ENCODE measurements at regions of chr11 and their contacts with region 1.

Region 1: GRCh38 chr11:63490551-63491239 is at the start of gene PLAAT5:
- DNase-seq: peak in 1 of 2 donors; percentile 48
- ATAC-seq: peak; percentile 72 to 90 (median 86)
- H3K4me3 ChIP-seq: peak within 1 kb of the TSS; percentile 30 to 63 (median 58)
- H3K27ac ChIP-seq: peak within 1 kb of the TSS in 8 of 10 donors; percentile 29 to 82 (median 49)
- H3K4me1 ChIP-seq: peaks cover 0 to 30% (median 21%) of the 10 kb centered on the region in 9 donors
- H3K27me3 ChIP-seq: peaks cover 0 to 17% (median 0%) of the 10 kb centered on the region in 7 donors
- CTCF ChIP-seq: peak in 1 of 9 donors; percentile 4
- total RNA-seq, gene PLAAT5: 0.69 to 7.2 (median 1.8) TPM

Region 2: DNA sequence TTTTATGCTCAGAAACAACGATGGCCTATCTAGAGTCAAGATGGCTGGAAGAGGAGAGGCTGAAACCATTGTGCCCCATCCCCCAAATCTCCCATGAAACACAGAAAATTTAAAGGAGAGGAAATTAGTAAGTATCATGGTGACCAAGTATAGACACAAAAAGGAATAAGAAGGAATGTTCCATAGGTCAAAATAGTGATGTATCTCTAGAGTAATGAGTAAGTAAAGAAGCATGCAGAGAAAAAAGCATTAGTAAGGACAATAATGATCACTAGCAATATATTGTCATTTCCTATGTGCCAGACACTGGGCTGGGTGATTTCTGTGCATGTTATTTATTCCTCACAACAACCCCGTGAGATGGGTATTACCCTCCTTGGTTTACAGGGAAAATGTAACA is 344.1 kb before region 1 on chr11:
- intact Hi-C with region 1: no loop called
- DNase-seq: no peak
- ATAC-seq: no peak
- H3K4me3 ChIP-seq: no peak overlapping the region
- H3K27ac ChIP-seq: no peak overlapping the region
- H3K4me1 ChIP-seq: peaks cover 0 to 6% (median 0%) of the 10 kb centered on the region in 9 donors
- H3K27me3 ChIP-seq: peaks cover 0 to 6% (median 0%) of the 10 kb centered on the region in 7 donors
- CTCF ChIP-seq: no peak

Region 3: GRCh38 chr11:63549411-63549810 is 58.7 kb after region 1 on chr11:
- intact Hi-C with region 1: loop called in 1 of 10 experiments (anchors 10 kb)
- DNase-seq: no peak
- ATAC-seq: no peak
- H3K4me3 ChIP-seq: no peak overlapping the region
- H3K27ac ChIP-seq: no peak overlapping the region
- H3K4me1 ChIP-seq: peaks cover 0 to 18% (median 0%) of the 10 kb centered on the region in 9 donors
- H3K27me3 ChIP-seq: peaks cover 0 to 2% (median 0%) of the 10 kb centered on the region in 7 donors
- CTCF ChIP-seq: no peak

Region 4: GRCh38 chr11:63621931-63622782 is 131.5 kb after region 1 on chr11:
- intact Hi-C with region 1: loop called in 1 of 10 experiments (anchors 5 kb)
- DNase-seq: no peak
- ATAC-seq: no peak
- H3K4me3 ChIP-seq: no peak overlapping the region
- H3K27ac ChIP-seq: no peak overlapping the region
- H3K4me1 ChIP-seq: peaks cover 0 to 22% (median 0%) of the 10 kb centered on the region in 9 donors
- H3K27me3 ChIP-seq: no peaks in the 10 kb centered on the region
- CTCF ChIP-seq: no peak

Region 5: DNA sequence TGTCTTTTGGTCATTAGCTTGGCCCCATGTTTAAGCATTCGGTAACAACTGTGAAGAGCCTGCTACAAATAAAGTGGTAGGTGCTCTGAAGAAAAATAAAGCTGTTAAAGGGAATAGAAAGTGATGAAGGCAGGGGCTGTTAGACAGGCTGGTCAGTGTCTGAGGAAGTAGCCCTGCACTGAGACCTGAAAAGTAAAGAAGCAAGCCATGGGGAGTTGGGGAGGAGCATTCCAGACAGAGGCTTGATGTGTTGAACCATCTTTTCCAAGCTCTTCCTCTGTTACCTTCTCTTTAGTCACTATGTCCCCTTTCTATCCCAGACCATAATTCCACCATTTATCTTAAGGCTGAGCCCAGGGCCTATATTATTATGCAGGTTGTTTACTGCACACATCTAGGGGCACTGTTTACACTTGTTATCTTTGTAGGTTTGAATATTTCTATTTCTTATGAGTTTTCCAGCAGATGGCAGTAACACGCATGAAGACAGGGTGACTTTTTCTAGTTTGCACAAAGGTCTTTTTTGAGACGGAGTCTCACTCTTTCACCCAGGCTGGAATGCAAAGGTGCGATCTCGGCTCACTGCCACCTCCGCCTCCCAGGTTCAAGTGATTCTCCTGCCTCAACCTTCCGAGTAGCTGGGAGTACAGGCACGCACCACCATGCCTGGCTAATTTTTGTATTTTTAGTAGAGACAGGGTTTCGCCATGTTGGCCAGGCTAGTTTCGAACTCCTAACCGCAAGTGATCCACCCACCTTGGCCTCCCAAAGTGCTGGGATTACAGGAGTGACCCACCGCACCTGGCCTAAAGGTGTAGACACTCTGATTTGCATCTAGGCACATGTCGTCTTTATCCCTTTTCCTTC is 254.8 kb after region 1 on chr11:
- intact Hi-C with region 1: loop called in 1 of 10 experiments (anchors 10 kb)
- DNase-seq: no peak
- ATAC-seq: peak in 1 of 8 donors; percentile 14
- H3K4me3 ChIP-seq: no peak overlapping the region
- H3K27ac ChIP-seq: no peak overlapping the region
- H3K4me1 ChIP-seq: peaks cover 0 to 5% (median 0%) of the 10 kb centered on the region in 9 donors
- H3K27me3 ChIP-seq: no peaks in the 10 kb centered on the region
- CTCF ChIP-seq: peak in 5 of 9 donors; percentile 11 to 29 (median 22)

Measured in heart right ventricle (tissue), 16 donors.